GM12878 (cell line): ENCODE measurements at regions of chr11 and their contacts with region 1.

Region 1: GRCh38 chr11:122796128-122796717 is 42.1 kb upstream of the CRTAM start:
- DNase-seq: no peak
- ATAC-seq: peak; percentile 98
- H3K4me3 ChIP-seq: no peak overlapping the region
- H3K27ac ChIP-seq: no peak overlapping the region
- H3K4me1 ChIP-seq: no peaks in the 10 kb centered on the region
- H3K27me3 ChIP-seq: no peaks in the 10 kb centered on the region
- CTCF ChIP-seq: peak; percentile 92 to 96 (median 93)
- EP300 ChIP-seq: no peak
- POLR2A ChIP-seq: no peak
- RAD21 ChIP-seq: peak; percentile 92

Region 2: GRCh38 chr11:122808478-122808869 is 12.3 kb after region 1 on chr11:
- CTCF ChIA-PET with region 1: interaction called, 92 read pairs
- POLR2A ChIA-PET with region 1: no interaction called
- RAD21 ChIA-PET with region 1: interaction called, 38 read pairs
- SMC1A ChIA-PET with region 1: interaction called, 68 read pairs
- in situ Hi-C with region 1: no loop called
- intact Hi-C with region 1: no loop called
- DNase-seq: peak; percentile 66
- ATAC-seq: peak; percentile 81
- H3K4me3 ChIP-seq: no peak overlapping the region
- H3K27ac ChIP-seq: peak overlapping the region; percentile 47; the same call in 1 of the 2 replicates
- H3K4me1 ChIP-seq: peaks cover 18% of the 10 kb centered on the region
- H3K27me3 ChIP-seq: no peaks in the 10 kb centered on the region
- CTCF ChIP-seq: no peak
- EP300 ChIP-seq: no peak
- POLR2A ChIP-seq: no peak
- RAD21 ChIP-seq: no peak

Region 3: GRCh38 chr11:122814401-122814800 is 18.2 kb after region 1 on chr11:
- CTCF ChIA-PET with region 1: interaction called, 92 read pairs
- POLR2A ChIA-PET with region 1: no interaction called
- RAD21 ChIA-PET with region 1: interaction called, 38 read pairs
- SMC1A ChIA-PET with region 1: interaction called, 68 read pairs
- in situ Hi-C with region 1: no loop called
- intact Hi-C with region 1: no loop called
- DNase-seq: no peak
- ATAC-seq: peak; percentile 93
- H3K4me3 ChIP-seq: no peak overlapping the region
- H3K27ac ChIP-seq: no peak overlapping the region
- H3K4me1 ChIP-seq: no peaks in the 10 kb centered on the region; the same call in 1 of the 2 replicates
- H3K27me3 ChIP-seq: no peaks in the 10 kb centered on the region
- CTCF ChIP-seq: peak; percentile 22 to 51 (median 28); a peak in 3 of 6 replicates
- EP300 ChIP-seq: no peak
- POLR2A ChIP-seq: no peak
- RAD21 ChIP-seq: peak; percentile 60

Region 4: GRCh38 chr11:122822241-122822640 is 26.0 kb after region 1 on chr11:
- CTCF ChIA-PET with region 1: interaction called, 73 read pairs
- POLR2A ChIA-PET with region 1: no interaction called
- RAD21 ChIA-PET with region 1: interaction called, 3 read pairs
- SMC1A ChIA-PET with region 1: interaction called, 16 read pairs
- in situ Hi-C with region 1: no loop called
- intact Hi-C with region 1: no loop called
- DNase-seq: no peak
- ATAC-seq: no peak
- H3K4me3 ChIP-seq: no peak overlapping the region
- H3K27ac ChIP-seq: no peak overlapping the region
- H3K4me1 ChIP-seq: no peaks in the 10 kb centered on the region
- H3K27me3 ChIP-seq: no peaks in the 10 kb centered on the region
- CTCF ChIP-seq: no peak
- EP300 ChIP-seq: no peak
- POLR2A ChIP-seq: no peak
- RAD21 ChIP-seq: no peak

Region 5: GRCh38 chr11:122832721-122833470 is 36.7 kb after region 1 on chr11:
- CTCF ChIA-PET with region 1: interaction called, 15 read pairs
- POLR2A ChIA-PET with region 1: no interaction called
- RAD21 ChIA-PET with region 1: interaction called, 6 read pairs
- SMC1A ChIA-PET with region 1: interaction called, 31 read pairs
- in situ Hi-C with region 1: no loop called
- intact Hi-C with region 1: no loop called
- DNase-seq: no peak
- ATAC-seq: peak; percentile 50
- H3K4me3 ChIP-seq: no peak overlapping the region
- H3K27ac ChIP-seq: no peak overlapping the region
- H3K4me1 ChIP-seq: no peaks in the 10 kb centered on the region
- H3K27me3 ChIP-seq: no peaks in the 10 kb centered on the region
- CTCF ChIP-seq: no peak
- EP300 ChIP-seq: no peak
- POLR2A ChIP-seq: no peak
- RAD21 ChIP-seq: no peak

Region 6: GRCh38 chr11:122843281-122844141 is 47.3 kb after region 1 on chr11:
- CTCF ChIA-PET with region 1: interaction called, 490 read pairs
- POLR2A ChIA-PET with region 1: interaction called, 3 read pairs
- RAD21 ChIA-PET with region 1: interaction called, 254 read pairs
- SMC1A ChIA-PET with region 1: interaction called, 21 read pairs
- in situ Hi-C with region 1: no loop called
- intact Hi-C with region 1: no loop called
- DNase-seq: no peak
- ATAC-seq: peak; percentile 87
- H3K4me3 ChIP-seq: no peak overlapping the region
- H3K27ac ChIP-seq: peak overlapping the region; percentile 42; the same call in 1 of the 2 replicates
- H3K4me1 ChIP-seq: peaks cover 11% of the 10 kb centered on the region; the same call in 1 of the 2 replicates
- H3K27me3 ChIP-seq: no peaks in the 10 kb centered on the region
- CTCF ChIP-seq: no peak
- EP300 ChIP-seq: no peak
- POLR2A ChIP-seq: no peak
- RAD21 ChIP-seq: no peak